ENCODE measurements at regions of chr5 and their contacts with region 1.

Region 1: DNA sequence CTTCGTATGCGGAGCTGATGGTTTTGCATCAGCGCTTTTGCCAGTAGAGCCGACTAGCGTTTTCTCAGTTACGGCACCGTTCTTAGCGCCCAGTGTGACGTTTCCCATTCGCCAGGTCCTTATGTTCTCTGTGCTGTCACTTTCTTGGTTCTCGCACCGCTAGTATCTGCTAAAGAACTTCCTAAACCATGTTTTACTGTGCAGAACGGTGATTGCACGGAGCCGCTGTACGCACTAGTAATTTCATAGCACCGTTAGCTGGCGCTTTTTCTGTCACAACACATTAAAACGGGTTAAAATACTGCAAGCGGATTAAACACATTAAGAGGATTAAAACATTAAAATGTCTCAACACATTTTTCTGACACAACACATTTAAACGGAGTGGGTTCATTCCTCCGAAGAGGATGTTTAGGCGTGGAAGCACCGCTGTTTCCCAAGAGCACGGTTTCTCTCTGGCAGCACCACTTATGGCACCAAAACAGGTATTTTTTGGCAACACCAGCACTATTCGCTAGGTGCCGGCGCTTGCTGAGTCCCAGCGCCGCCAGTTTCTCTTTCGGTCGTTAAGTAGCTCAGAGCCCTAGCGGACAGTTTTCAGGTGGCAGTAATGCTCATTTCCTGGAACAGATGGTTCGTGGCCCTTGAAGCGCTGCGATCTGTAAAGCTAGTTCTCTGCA is 20.4 kb downstream of the ANXA2R start:
- DNase-seq: peak; percentile 63 to 94 (median 88)
- ATAC-seq: peak; percentile 77
- H3K4me3 ChIP-seq: peak overlapping the region; percentile 76
- H3K4me3 Mint-ChIP-seq: peak overlapping the region; percentile 92 to 99 (median 98)
- H3K27ac ChIP-seq: peak overlapping the region; percentile 96
- H3K27ac Mint-ChIP-seq: peak overlapping the region; percentile 96 to 100 (median 99)
- H3K4me1 ChIP-seq: peaks cover 34 to 35% of the 10 kb centered on the region in 2 donors
- H3K4me1 Mint-ChIP-seq: peaks cover 20 to 52% (median 46%) of the 10 kb centered on the region in 7 donors
- H3K27me3 ChIP-seq: no peaks in the 10 kb centered on the region
- H3K27me3 Mint-ChIP-seq: no peaks in the 10 kb centered on the region

Region 2: GRCh38 chr5:41869739-41870626 is 1149.8 kb before region 1 on chr5 and contains the start of gene OXCT1:
- CTCF ChIA-PET with region 1: no interaction called
- POLR2A ChIA-PET with region 1: no interaction called
- intact Hi-C with region 1: loop called in 1 of 2 experiments (anchors 2 kb)
- DNase-seq: peak; percentile 88 to 96 (median 95)
- ATAC-seq: peak; percentile 97
- H3K4me3 ChIP-seq: peak within 1 kb of the TSS; percentile 91
- H3K4me3 Mint-ChIP-seq: peak within 1 kb of the TSS; percentile 85 to 94 (median 90)
- H3K27ac ChIP-seq: peak within 1 kb of the TSS; percentile 97
- H3K27ac Mint-ChIP-seq: peak within 1 kb of the TSS; percentile 89 to 98 (median 97)
- H3K4me1 ChIP-seq: peaks cover 16% of the 10 kb centered on the region in 2 donors
- H3K4me1 Mint-ChIP-seq: peaks cover 18 to 63% (median 57%) of the 10 kb centered on the region in 7 donors
- H3K27me3 ChIP-seq: no peaks in the 10 kb centered on the region
- H3K27me3 Mint-ChIP-seq: no peaks in the 10 kb centered on the region
- total RNA-seq, gene OXCT1: 18.6 to 53.1 (median 30.0) TPM

Region 3: GRCh38 chr5:42950440-42951292 is 69.1 kb before region 1 on chr5:
- CTCF ChIA-PET with region 1: interaction called, 10 read pairs
- POLR2A ChIA-PET with region 1: interaction called, 229 read pairs
- intact Hi-C with region 1: loop called (anchors 1 kb)
- DNase-seq: peak in 8 of 9 donors; percentile 39 to 77 (median 51)
- ATAC-seq: peak; percentile 51
- H3K4me3 ChIP-seq: peak overlapping the region; percentile 80
- H3K4me3 Mint-ChIP-seq: peak overlapping the region; percentile 87 to 99 (median 97)
- H3K27ac ChIP-seq: peak overlapping the region; percentile 98
- H3K27ac Mint-ChIP-seq: peak overlapping the region; percentile 97 to 100 (median 99)
- H3K4me1 ChIP-seq: peaks cover 5 to 22% of the 10 kb centered on the region in 2 donors
- H3K4me1 Mint-ChIP-seq: peaks cover 13 to 51% (median 23%) of the 10 kb centered on the region in 7 donors
- H3K27me3 ChIP-seq: no peaks in the 10 kb centered on the region
- H3K27me3 Mint-ChIP-seq: peaks cover 0 to 9% (median 0%) of the 10 kb centered on the region in 5 donors

Region 4: GRCh38 chr5:43034591-43034968 is 14.8 kb after region 1 on chr5:
- CTCF ChIA-PET with region 1: interaction called, 154 read pairs
- POLR2A ChIA-PET with region 1: interaction called, 1,055 read pairs
- intact Hi-C with region 1: loop called (anchors 1 kb)
- DNase-seq: peak in 1 of 9 donors; percentile 30
- ATAC-seq: no peak
- H3K4me3 ChIP-seq: no peak overlapping the region
- H3K4me3 Mint-ChIP-seq: peak overlapping the region in 8 of 10 donors; percentile 5 to 59 (median 20)
- H3K27ac ChIP-seq: no peak overlapping the region
- H3K27ac Mint-ChIP-seq: peak overlapping the region in 8 of 9 donors; percentile 8 to 100 (median 49)
- H3K4me1 ChIP-seq: peaks cover 16 to 17% of the 10 kb centered on the region in 2 donors
- H3K4me1 Mint-ChIP-seq: peaks cover 18 to 69% (median 59%) of the 10 kb centered on the region in 7 donors
- H3K27me3 ChIP-seq: no peaks in the 10 kb centered on the region
- H3K27me3 Mint-ChIP-seq: no peaks in the 10 kb centered on the region

Region 5: DNA sequence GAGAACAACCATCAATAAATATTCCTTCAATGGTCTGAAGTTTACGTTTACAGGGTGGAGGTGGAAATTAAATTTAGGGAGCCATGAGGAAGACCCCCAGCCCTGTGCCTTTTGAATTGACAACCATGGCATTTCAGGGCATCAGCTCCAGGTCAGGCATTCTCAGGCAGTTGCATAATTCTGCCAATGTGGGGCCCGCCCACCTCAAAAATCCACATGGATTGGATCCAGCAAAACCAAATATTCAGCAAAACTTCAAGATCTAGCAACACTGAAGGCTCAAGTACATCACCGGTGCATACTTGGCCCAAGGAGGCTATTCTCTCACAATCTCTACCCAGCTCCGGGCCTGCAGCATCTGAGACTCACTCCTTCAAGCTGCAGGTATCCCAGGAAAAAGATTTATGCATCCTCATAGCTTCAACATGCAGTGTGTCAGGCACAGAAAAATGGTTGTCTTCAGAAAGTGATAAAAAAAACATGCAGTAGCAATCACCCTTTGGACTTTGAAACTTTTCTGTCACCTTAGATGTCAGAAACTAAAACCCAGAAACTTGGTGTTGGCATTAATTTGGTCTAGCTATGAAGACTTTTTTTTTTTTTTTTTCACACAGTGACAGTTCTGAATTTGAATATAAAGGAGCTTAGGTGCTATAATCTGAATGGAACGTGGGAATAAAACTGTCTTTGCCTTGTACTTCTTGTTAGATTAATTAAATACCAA is 41.8 kb after region 1 on chr5:
- CTCF ChIA-PET with region 1: interaction called, 33 read pairs
- POLR2A ChIA-PET with region 1: interaction called, 317 read pairs
- intact Hi-C with region 1: loop called (anchors 1 kb)
- DNase-seq: no peak
- ATAC-seq: no peak
- H3K4me3 ChIP-seq: no peak overlapping the region
- H3K4me3 Mint-ChIP-seq: no peak overlapping the region
- H3K27ac ChIP-seq: no peak overlapping the region
- H3K27ac Mint-ChIP-seq: peak overlapping the region in 8 of 9 donors; percentile 0 to 85 (median 68)
- H3K4me1 ChIP-seq: peaks cover 0 to 8% of the 10 kb centered on the region in 2 donors
- H3K4me1 Mint-ChIP-seq: peaks cover 0 to 29% (median 14%) of the 10 kb centered on the region in 7 donors
- H3K27me3 ChIP-seq: no peaks in the 10 kb centered on the region
- H3K27me3 Mint-ChIP-seq: no peaks in the 10 kb centered on the region

Region 6: GRCh38 chr5:43191740-43192557 is 172.2 kb after region 1 on chr5 and contains the start of gene NIM1K:
- CTCF ChIA-PET with region 1: no interaction called
- POLR2A ChIA-PET with region 1: no interaction called
- intact Hi-C with region 1: loop called in 1 of 2 experiments (anchors 5 kb)
- DNase-seq: peak in 8 of 9 donors; percentile 7 to 55 (median 16)
- ATAC-seq: peak; percentile 51
- H3K4me3 ChIP-seq: peak within 1 kb of the TSS; percentile 63
- H3K4me3 Mint-ChIP-seq: peak within 1 kb of the TSS; percentile 81 to 94 (median 88)
- H3K27ac ChIP-seq: no peak within 1 kb of the TSS
- H3K27ac Mint-ChIP-seq: peak within 1 kb of the TSS in 6 of 9 donors; percentile 21 to 86 (median 71)
- H3K4me1 ChIP-seq: peaks cover 4 to 18% of the 10 kb centered on the region in 2 donors
- H3K4me1 Mint-ChIP-seq: peaks cover 11 to 33% (median 23%) of the 10 kb centered on the region in 7 donors
- H3K27me3 ChIP-seq: peaks cover 0 to 5% of the 10 kb centered on the region in 2 donors
- H3K27me3 Mint-ChIP-seq: peaks cover 15 to 22% (median 19%) of the 10 kb centered on the region in 5 donors
- total RNA-seq, gene NIM1K: 0.40 to 0.97 (median 0.61) TPM